ENCODE measurements at regions of chr14 and their contacts with region 1.

Region 1: GRCh38 chr14:106538201-106538600 is 1011.8 kb downstream of the TMEM121 start:
- DNase-seq: no peak
- ATAC-seq: no peak
- H3K4me3 Mint-ChIP-seq: peak overlapping the region; percentile 67
- H3K27ac Mint-ChIP-seq: peak overlapping the region; percentile 61
- H3K4me1 Mint-ChIP-seq: peaks cover 42% of the 10 kb centered on the region
- H3K27me3 Mint-ChIP-seq: peaks cover 6% of the 10 kb centered on the region
- CTCF ChIP-seq: no peak

Region 2: GRCh38 chr14:106327234-106327633 is 211.0 kb before region 1 on chr14:
- CTCF ChIA-PET with region 1: no interaction called
- POLR2A ChIA-PET with region 1: no interaction called
- intact Hi-C with region 1: no loop called
- DNase-seq: no peak
- ATAC-seq: no peak
- H3K4me3 Mint-ChIP-seq: no peak overlapping the region
- H3K27ac Mint-ChIP-seq: no peak overlapping the region
- H3K4me1 Mint-ChIP-seq: peaks cover 3% of the 10 kb centered on the region
- H3K27me3 Mint-ChIP-seq: peaks cover 8% of the 10 kb centered on the region
- CTCF ChIP-seq: no peak

Region 3: GRCh38 chr14:106556665-106557289 is 18.6 kb after region 1 on chr14:
- CTCF ChIA-PET with region 1: interaction called, 33 read pairs
- POLR2A ChIA-PET with region 1: no interaction called
- intact Hi-C with region 1: loop called (anchors 1 kb)
- DNase-seq: peak; percentile 76
- ATAC-seq: peak; percentile 68
- H3K4me3 Mint-ChIP-seq: no peak overlapping the region
- H3K27ac Mint-ChIP-seq: no peak overlapping the region
- H3K4me1 Mint-ChIP-seq: peaks cover 6% of the 10 kb centered on the region
- H3K27me3 Mint-ChIP-seq: peaks cover 8% of the 10 kb centered on the region
- CTCF ChIP-seq: peak; percentile 69

Region 4: GRCh38 chr14:106564058-106564656 is 26.0 kb after region 1 on chr14:
- CTCF ChIA-PET with region 1: interaction called, 33 read pairs
- POLR2A ChIA-PET with region 1: interaction called, 3 read pairs
- intact Hi-C with region 1: loop called (anchors 1 kb)
- DNase-seq: peak; percentile 56
- ATAC-seq: peak; percentile 88
- H3K4me3 Mint-ChIP-seq: no peak overlapping the region
- H3K27ac Mint-ChIP-seq: peak overlapping the region; percentile 30
- H3K4me1 Mint-ChIP-seq: peaks cover 3% of the 10 kb centered on the region
- H3K27me3 Mint-ChIP-seq: peaks cover 14% of the 10 kb centered on the region
- CTCF ChIP-seq: peak; percentile 26

Region 5: GRCh38 chr14:106586098-106586704 is 48.0 kb after region 1 on chr14:
- CTCF ChIA-PET with region 1: interaction called, 5 read pairs
- POLR2A ChIA-PET with region 1: no interaction called
- intact Hi-C with region 1: loop called (anchors 1 kb)
- DNase-seq: peak; percentile 60
- ATAC-seq: peak; percentile 95
- H3K4me3 Mint-ChIP-seq: no peak overlapping the region
- H3K27ac Mint-ChIP-seq: no peak overlapping the region
- H3K4me1 Mint-ChIP-seq: peaks cover 36% of the 10 kb centered on the region
- H3K27me3 Mint-ChIP-seq: no peaks in the 10 kb centered on the region
- CTCF ChIP-seq: no peak